ENCODE measurements at regions of chr1 and their contacts with region 1.

Region 1: DNA sequence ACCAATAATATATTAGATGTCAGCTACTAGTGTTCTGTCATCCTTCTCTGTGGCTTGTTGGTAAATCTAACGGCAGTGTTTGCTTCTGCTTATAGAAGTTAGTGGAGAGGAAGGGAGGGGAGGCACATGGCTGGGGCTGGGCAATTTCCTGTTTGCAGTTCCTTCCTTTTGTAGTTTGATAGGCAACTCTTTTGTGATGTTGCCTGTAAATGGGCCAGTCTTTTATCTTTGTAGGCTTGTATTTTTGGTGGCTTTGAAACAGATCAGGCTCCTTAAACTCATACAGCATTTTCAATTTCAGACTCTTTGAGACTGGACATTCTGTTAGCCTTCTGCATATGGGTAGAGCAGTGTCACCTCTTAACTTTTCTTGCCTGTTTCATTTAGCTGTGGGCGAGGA is 48.1 kb downstream of the CDC14A start:
- DNase-seq: peak; percentile 58
- H3K4me3 Mint-ChIP-seq: peak overlapping the region; percentile 77
- H3K27ac Mint-ChIP-seq: peak overlapping the region; percentile 94
- H3K4me1 Mint-ChIP-seq: peaks cover 79% of the 10 kb centered on the region
- H3K27me3 Mint-ChIP-seq: no peaks in the 10 kb centered on the region

Region 2: DNA sequence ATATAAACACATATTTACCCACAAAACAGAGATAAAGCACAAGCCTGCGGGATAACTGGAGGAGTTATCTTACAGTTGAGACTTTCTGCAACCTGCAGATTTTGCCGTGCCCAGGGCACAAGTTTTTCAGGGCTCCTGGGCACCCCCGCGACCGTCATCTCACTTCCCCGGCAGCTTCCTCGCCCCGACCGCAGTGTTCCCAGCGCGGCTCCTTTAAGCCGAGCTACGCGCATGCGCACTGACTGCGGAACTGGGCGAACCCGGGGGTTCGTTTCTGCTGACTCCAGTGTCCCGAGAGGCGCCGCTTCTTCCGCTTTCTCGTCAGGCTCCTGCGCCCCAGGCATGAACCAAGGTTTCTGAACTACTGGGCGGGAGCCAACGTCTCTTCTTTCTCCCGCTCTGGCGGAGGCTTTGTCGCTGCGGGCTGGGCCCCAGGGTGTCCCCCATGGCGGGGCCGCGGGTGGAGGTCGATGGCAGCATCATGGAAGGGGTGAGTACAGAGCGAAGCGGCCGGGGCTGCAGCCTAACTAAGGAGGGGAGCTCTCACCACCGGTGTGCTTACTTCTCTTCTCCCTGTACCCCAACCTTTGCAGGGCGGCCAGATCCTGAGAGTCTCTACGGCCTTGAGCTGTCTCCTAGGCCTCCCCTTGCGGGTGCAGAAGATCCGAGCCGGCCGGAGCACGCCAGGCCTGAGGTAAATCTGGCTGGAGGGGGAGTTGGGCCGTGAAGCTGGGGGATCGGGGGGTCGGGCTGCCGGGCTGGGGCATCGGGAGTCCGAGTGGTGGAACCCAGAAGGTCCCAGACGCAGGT is 134.3 kb before region 1 on chr1 and contains the start of gene RTCA:
- intact Hi-C with region 1: loop called (anchors 5 kb)
- DNase-seq: peak; percentile 94
- H3K4me3 Mint-ChIP-seq: peak within 1 kb of the TSS; percentile 100
- H3K27ac Mint-ChIP-seq: peak within 1 kb of the TSS; percentile 100
- H3K4me1 Mint-ChIP-seq: peaks cover 50% of the 10 kb centered on the region
- H3K27me3 Mint-ChIP-seq: peaks cover 4% of the 10 kb centered on the region
- total RNA-seq, gene RTCA: 48.1 and 52.0 TPM in 2 replicates

Region 3: DNA sequence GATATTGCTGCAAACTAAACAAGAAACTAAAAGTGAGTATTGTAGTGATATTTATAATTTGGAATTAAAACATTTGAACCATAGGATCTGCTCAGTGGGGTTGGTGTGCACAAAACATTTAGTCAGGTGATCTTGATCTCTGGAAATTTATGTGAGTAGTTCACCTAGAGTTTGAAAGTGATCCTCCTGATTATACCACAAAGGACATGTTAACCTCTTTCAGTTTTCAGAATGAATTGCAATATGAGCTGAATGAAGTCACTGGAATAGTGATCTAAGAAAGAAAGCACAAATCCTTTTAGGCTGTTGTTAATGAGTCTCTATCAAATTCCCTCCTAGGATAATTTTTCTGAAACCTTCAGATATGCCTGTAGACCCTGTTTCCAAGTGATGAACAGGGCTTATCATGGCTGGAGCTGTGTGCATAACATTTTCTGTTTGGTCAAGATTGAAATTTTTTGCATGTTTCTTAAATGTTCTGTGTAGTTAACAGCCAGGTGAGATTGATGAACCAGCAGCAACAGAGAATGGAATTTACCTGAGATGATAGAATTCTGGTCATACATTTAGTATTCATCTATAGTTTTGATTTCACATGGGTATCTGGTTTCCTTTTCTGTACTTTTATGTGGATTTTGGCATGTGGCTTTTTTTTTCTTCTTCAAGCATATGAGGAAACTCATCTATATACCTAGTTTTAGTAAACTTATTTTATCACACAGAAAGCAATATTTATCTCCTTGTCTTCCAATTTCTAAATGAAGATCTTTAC is 22.6 kb before region 1 on chr1:
- intact Hi-C with region 1: loop called (anchors 1 kb)
- DNase-seq: no peak
- H3K4me3 Mint-ChIP-seq: peak overlapping the region; percentile 38
- H3K27ac Mint-ChIP-seq: peak overlapping the region; percentile 75
- H3K4me1 Mint-ChIP-seq: peaks cover 55% of the 10 kb centered on the region
- H3K27me3 Mint-ChIP-seq: peaks cover 2% of the 10 kb centered on the region

Region 4: DNA sequence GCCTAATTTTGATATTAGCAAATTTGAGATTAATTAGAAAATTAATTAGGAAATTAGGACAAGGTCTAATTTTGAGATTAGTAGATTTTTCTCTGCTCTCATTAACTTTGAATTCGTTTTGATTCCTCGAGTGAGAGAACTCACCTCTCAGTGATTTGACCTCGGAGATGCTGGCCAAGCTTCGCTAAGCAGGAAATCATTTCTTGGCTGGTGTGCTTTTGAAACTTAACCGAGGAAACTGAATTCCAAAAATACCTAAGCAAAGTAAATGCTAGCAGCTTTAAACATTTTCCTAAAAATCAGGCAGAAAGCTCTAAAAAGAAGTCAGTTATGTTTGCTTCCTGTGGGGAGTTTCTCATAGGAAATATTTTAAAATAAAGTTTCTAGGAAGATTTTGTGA is 13.2 kb before region 1 on chr1:
- intact Hi-C with region 1: loop called (anchors 1 kb)
- DNase-seq: no peak
- H3K4me3 Mint-ChIP-seq: peak overlapping the region; percentile 39
- H3K27ac Mint-ChIP-seq: no peak overlapping the region
- H3K4me1 Mint-ChIP-seq: peaks cover 61% of the 10 kb centered on the region
- H3K27me3 Mint-ChIP-seq: no peaks in the 10 kb centered on the region

Region 5: GRCh38 chr1:100414693-100415497 is 14.5 kb after region 1 on chr1:
- intact Hi-C with region 1: loop called (anchors 2 kb)
- DNase-seq: no peak
- H3K4me3 Mint-ChIP-seq: no peak overlapping the region
- H3K27ac Mint-ChIP-seq: no peak overlapping the region
- H3K4me1 Mint-ChIP-seq: peaks cover 43% of the 10 kb centered on the region
- H3K27me3 Mint-ChIP-seq: no peaks in the 10 kb centered on the region

Region 6: DNA sequence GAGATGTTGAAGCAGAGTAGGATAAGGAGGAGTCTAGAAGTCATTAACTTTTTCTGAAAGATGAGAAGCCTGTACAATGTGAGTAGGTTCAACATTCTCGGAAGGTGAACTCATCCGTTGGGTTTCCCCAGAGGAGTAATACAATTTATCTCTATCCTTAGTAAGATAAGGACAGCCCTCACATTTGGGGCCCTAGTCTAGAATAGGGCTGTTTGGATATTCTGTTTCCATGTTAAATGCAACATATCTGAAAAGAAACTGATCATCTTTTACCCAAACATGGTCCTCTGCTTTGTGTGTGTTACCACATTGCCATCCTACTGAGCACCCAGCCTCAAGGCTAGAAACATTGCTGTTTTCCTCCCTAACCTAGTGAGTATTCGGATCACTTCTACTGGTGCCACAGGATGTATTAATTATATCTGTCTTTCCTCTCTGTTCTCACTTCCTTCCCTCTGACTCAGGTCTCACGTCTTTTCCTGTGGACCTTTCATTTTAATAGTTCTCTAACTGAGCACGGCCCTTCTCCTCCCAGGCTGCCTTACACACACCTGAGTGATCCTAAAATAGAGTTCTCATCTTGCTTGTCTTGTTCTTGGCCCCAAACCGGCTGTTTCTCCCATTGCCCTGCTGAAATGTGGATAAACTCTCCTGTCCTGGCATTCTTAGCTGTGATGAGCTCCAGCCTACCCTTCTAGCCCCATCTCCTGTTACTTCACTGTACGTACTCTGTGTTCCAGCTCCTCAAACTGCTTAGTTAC is 43.6 kb after region 1 on chr1:
- intact Hi-C with region 1: loop called (anchors 1 kb)
- DNase-seq: peak; percentile 22
- H3K4me3 Mint-ChIP-seq: peak overlapping the region; percentile 61
- H3K27ac Mint-ChIP-seq: peak overlapping the region; percentile 95
- H3K4me1 Mint-ChIP-seq: peaks cover 91% of the 10 kb centered on the region
- H3K27me3 Mint-ChIP-seq: no peaks in the 10 kb centered on the region

Region 7: GRCh38 chr1:100452641-100453040 is 52.2 kb after region 1 on chr1:
- intact Hi-C with region 1: loop called (anchors 2 kb)
- DNase-seq: no peak
- H3K4me3 Mint-ChIP-seq: no peak overlapping the region
- H3K27ac Mint-ChIP-seq: peak overlapping the region; percentile 59
- H3K4me1 Mint-ChIP-seq: peaks cover 77% of the 10 kb centered on the region
- H3K27me3 Mint-ChIP-seq: no peaks in the 10 kb centered on the region

Measured in activated T-helper 1 cell treated with anti-CD3 and anti-CD28 coated beads, Interleukin-12 subunit alpha, Interleukin-12 subunit beta, Interleukin-2, Interleukin-4 antibody, amounts not matched to agents 30 ng/mL and 10 ng/mL and 1 ng/mL, durations not matched to agents 14 hours and 24 hours and 36 hours (primary cell).